CD4-positive, alpha-beta T cell (primary cell): ENCODE measurements at regions of chr6 and their contacts with region 1.

Region 1: DNA sequence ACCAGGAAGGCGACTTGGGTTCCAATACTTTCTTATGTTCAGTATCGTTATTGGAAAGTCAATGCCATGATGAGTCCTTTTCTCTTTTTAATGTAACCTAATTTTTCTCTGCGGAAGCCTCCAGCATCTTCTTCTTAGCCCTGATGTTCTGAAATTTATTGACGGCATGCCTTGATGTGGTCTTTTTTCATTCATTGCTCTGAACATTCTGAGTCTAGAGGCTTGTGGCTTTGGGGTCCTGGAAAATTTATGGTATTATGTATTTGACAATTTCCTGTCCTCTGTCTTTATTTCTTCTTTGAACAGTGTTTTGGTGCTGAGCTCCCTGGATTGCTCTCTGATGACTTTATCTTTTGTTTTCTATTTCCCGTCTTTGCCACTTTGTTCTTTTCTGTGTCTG is 28.7 kb upstream of the MAS1 start:
- DNase-seq: peak in 3 of 14 experiments; percentile 21 to 50 (median 39)
- ATAC-seq: peak; percentile 77
- H3K4me3 ChIP-seq: no peak overlapping the region
- H3K4me3 Mint-ChIP-seq: peak overlapping the region; percentile 42
- H3K27ac ChIP-seq: no peak overlapping the region
- H3K27ac Mint-ChIP-seq: peak overlapping the region; percentile 25
- H3K4me1 ChIP-seq: peaks cover 11% of the 10 kb centered on the region
- H3K4me1 Mint-ChIP-seq: peaks cover 21% of the 10 kb centered on the region
- H3K27me3 ChIP-seq: no peaks in the 10 kb centered on the region
- H3K27me3 Mint-ChIP-seq: no peaks in the 10 kb centered on the region
- CTCF ChIP-seq: no peak

Region 2: DNA sequence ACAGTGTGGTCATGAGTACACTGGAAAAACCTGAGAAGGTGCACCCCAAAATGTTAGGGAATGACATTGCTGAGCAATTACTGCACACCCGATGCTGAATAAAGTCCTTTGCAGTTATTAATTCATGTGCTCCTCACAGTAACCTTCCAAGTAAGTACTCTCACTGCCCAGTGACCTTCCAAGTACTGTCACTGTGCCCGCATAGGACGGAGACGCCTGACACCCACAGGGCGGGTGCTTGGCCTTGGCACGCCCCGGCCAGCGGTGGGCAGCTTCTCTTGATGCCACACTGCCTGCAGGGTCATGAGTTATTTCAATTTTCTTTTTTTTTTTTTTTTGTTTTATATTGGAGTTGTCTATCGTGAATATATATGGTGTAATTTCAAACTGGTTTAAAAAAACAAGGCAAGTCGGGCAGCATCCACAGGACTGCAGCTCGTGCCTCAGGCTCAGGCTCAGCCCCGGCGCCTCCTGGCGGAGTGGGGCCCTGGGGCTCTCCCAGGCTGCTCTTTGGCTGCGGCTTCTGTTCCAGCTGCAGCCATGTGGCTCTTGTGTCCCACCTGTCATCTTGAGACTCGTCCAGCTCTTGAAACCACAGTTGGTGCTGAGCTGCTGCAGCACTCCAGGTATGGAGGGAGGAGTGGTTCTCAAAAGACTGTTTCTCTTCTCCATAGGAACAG is 35.0 kb before region 1 on chr6:
- CTCF ChIA-PET with region 1: no interaction called
- POLR2A ChIA-PET with region 1: no interaction called
- intact Hi-C with region 1: no loop called
- DNase-seq: no peak
- ATAC-seq: no peak
- H3K4me3 ChIP-seq: no peak overlapping the region
- H3K4me3 Mint-ChIP-seq: no peak overlapping the region
- H3K27ac ChIP-seq: no peak overlapping the region
- H3K27ac Mint-ChIP-seq: no peak overlapping the region
- H3K4me1 ChIP-seq: peaks cover 5% of the 10 kb centered on the region
- H3K4me1 Mint-ChIP-seq: peaks cover 24% of the 10 kb centered on the region
- H3K27me3 ChIP-seq: no peaks in the 10 kb centered on the region
- H3K27me3 Mint-ChIP-seq: no peaks in the 10 kb centered on the region
- CTCF ChIP-seq: no peak

Region 3: DNA sequence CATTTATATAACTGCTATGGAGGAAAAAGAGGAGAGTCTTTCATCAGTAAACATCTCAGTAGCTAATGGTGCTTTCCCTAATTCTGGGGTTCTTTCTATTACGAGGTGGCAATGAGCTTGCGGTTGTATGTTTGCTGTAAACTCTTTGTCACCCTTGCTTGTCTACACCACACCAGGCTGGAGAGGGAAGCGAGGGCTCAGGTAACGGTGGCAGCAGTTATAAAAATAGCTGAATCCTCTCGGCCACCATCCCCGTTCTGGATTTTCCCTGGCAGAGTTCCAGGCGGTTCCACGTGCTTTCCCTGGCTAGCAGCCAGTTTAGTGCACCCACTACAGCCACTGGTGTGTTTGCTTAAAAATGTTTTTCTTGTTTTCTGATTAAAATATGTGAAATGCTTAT is 67.7 kb after region 1 on chr6:
- CTCF ChIA-PET with region 1: no interaction called
- POLR2A ChIA-PET with region 1: no interaction called
- intact Hi-C with region 1: no loop called
- DNase-seq: peak; percentile 11 to 88 (median 46)
- ATAC-seq: peak; percentile 90
- H3K4me3 ChIP-seq: no peak overlapping the region
- H3K4me3 Mint-ChIP-seq: no peak overlapping the region
- H3K27ac ChIP-seq: peak overlapping the region in 1 of 2 donors; percentile 59
- H3K27ac Mint-ChIP-seq: peak overlapping the region; percentile 41
- H3K4me1 ChIP-seq: peaks cover 17% of the 10 kb centered on the region
- H3K4me1 Mint-ChIP-seq: peaks cover 22% of the 10 kb centered on the region
- H3K27me3 ChIP-seq: no peaks in the 10 kb centered on the region
- H3K27me3 Mint-ChIP-seq: peaks cover 5% of the 10 kb centered on the region
- CTCF ChIP-seq: no peak

Region 4: DNA sequence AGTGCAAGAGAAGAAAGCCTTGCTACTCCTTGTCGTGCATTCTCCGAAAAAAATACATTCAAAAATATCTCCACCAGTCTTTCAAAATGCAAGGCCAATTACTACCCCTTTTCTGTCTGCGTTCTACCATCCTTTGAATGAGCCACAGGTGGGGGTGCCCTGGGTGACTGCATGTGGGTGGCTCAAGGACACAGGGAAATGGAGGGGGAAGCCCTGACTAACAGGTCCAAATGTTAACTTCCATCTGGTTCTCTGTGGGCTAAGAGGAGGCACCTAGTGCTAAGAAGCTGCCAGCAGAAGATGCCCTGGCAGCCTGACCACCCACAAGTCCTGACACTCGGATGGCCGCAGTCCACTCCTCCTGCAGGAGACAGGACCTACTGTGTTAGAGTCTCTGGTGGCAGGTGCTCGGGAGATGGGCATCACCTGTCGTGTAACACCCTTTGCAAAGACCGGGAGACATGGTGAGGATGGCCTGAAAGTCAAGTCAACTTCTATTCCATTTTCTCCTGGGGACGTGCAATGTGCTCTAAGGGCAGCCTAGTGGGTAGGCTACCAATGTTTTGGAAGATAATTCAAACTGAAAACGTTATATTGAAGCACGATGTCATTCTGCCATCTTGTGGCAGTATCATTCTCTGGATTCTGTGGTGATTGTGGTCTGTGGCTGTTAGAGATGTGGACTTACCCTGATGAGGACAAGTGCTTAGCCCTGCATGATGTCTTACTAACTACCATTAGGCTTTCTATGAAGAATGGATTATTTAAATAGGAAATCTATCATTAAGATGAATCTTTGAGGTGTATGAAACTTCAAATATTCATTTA is 79.4 kb after region 1 on chr6:
- CTCF ChIA-PET with region 1: no interaction called
- POLR2A ChIA-PET with region 1: no interaction called
- intact Hi-C with region 1: loop called (anchors 2 to 5 kb)
- DNase-seq: peak in 8 of 14 experiments; percentile 5 to 80 (median 22)
- ATAC-seq: peak; percentile 82
- H3K4me3 ChIP-seq: no peak overlapping the region
- H3K4me3 Mint-ChIP-seq: no peak overlapping the region
- H3K27ac ChIP-seq: no peak overlapping the region
- H3K27ac Mint-ChIP-seq: no peak overlapping the region
- H3K4me1 ChIP-seq: peaks cover 4% of the 10 kb centered on the region
- H3K4me1 Mint-ChIP-seq: peaks cover 8% of the 10 kb centered on the region
- H3K27me3 ChIP-seq: no peaks in the 10 kb centered on the region
- H3K27me3 Mint-ChIP-seq: peaks cover 5% of the 10 kb centered on the region
- CTCF ChIP-seq: peak; percentile 46

Region 5: DNA sequence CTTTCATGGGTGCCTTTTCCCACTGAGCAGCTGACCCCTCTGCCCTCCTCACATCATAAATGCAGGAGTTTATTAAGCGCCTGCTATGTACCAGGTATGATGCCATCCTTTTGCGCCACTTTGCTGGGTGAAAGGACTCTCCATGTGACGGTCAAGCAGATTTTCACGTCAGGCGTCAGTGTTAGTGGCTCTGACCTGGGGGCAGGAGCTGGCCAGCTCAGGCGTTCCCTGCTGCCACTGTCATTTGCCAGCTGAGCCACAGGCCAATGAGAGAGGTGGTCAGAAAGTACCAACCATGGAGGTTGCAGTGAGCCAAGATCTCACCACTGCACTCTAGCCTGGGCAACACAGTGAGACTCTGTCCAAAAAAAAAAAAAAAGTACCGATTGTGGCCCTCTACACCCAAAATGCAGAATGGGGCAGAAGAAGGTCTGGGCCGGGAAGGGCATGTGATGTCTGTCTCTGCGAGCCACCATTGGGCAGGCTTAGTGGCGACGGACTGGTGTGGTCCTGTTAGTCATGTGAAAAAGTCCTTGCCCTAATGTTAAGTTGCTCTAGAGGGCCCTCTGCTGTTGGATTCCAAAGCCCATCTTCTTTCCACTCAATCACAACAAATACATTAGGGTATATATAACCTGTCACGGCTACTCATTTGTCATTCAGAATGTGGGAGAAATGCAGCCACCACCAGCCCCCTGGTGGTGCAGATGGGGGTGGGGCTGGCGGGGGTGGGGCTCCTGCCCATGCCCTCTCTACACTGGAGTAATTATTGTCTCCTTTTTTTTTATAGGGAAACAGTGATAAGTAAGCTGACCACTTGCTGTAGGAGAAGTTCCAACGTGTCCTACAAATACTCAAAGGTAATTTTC is 241.1 kb after region 1 on chr6:
- CTCF ChIA-PET with region 1: no interaction called
- POLR2A ChIA-PET with region 1: no interaction called
- intact Hi-C with region 1: loop called (anchors 10 kb)
- DNase-seq: peak in 4 of 14 experiments; percentile 9 to 36 (median 25)
- ATAC-seq: no peak
- H3K4me3 ChIP-seq: no peak overlapping the region
- H3K4me3 Mint-ChIP-seq: no peak overlapping the region
- H3K27ac ChIP-seq: no peak overlapping the region
- H3K27ac Mint-ChIP-seq: no peak overlapping the region
- H3K4me1 ChIP-seq: no peaks in the 10 kb centered on the region
- H3K4me1 Mint-ChIP-seq: peaks cover 17% of the 10 kb centered on the region
- H3K27me3 ChIP-seq: no peaks in the 10 kb centered on the region
- H3K27me3 Mint-ChIP-seq: no peaks in the 10 kb centered on the region
- CTCF ChIP-seq: no peak

Region 6: GRCh38 chr6:160455541-160456213 is 593.6 kb after region 1 on chr6:
- CTCF ChIA-PET with region 1: no interaction called
- POLR2A ChIA-PET with region 1: no interaction called
- intact Hi-C with region 1: loop called in 1 of 2 experiments (anchors 5 kb)
- DNase-seq: peak; percentile 49 to 80 (median 62)
- ATAC-seq: peak; percentile 98
- H3K4me3 ChIP-seq: no peak overlapping the region
- H3K4me3 Mint-ChIP-seq: no peak overlapping the region
- H3K27ac ChIP-seq: no peak overlapping the region
- H3K27ac Mint-ChIP-seq: no peak overlapping the region
- H3K4me1 ChIP-seq: peaks cover 47% of the 10 kb centered on the region
- H3K4me1 Mint-ChIP-seq: peaks cover 35% of the 10 kb centered on the region
- H3K27me3 ChIP-seq: no peaks in the 10 kb centered on the region
- H3K27me3 Mint-ChIP-seq: peaks cover 29% of the 10 kb centered on the region
- CTCF ChIP-seq: peak; percentile 98

Region 7: DNA sequence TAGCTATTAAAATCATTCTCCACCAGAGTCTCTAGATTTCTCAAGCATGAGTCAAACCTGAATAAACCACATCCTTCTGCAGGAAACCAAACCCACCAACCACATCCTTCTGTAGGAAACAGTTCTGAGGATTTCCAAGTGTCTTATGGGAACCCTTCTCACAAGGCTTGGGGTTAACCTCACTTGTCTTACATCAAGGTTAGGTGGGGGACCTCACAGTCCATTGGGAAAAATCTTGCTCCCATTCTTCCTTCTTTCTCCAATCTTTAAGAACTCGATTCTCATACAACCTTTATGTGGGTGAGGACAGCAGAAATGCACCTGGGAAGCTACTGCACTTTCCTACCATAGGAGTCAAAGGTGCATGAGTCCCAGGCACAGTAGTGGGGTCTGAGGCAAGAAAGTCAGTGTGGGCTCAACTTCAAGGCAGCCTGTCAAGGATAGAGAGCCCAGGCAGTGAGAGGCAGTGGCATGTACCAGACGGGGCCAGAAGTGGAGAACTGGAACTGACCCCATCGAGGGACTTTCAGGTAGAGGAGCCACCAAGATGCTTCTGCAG is 600.5 kb after region 1 on chr6:
- CTCF ChIA-PET with region 1: no interaction called
- POLR2A ChIA-PET with region 1: interaction called, 3 read pairs
- intact Hi-C with region 1: loop called (anchors 2 to 5 kb)
- DNase-seq: peak in 10 of 14 experiments; percentile 18 to 95 (median 54)
- ATAC-seq: peak; percentile 89
- H3K4me3 ChIP-seq: peak overlapping the region; percentile 19
- H3K4me3 Mint-ChIP-seq: peak overlapping the region; percentile 68
- H3K27ac ChIP-seq: no peak overlapping the region
- H3K27ac Mint-ChIP-seq: peak overlapping the region; percentile 66
- H3K4me1 ChIP-seq: peaks cover 66% of the 10 kb centered on the region
- H3K4me1 Mint-ChIP-seq: peaks cover 82% of the 10 kb centered on the region
- H3K27me3 ChIP-seq: no peaks in the 10 kb centered on the region
- H3K27me3 Mint-ChIP-seq: peaks cover 17% of the 10 kb centered on the region
- CTCF ChIP-seq: no peak

Region 8: GRCh38 chr6:160534050-160534696 is 672.1 kb after region 1 on chr6:
- CTCF ChIA-PET with region 1: no interaction called
- POLR2A ChIA-PET with region 1: no interaction called
- intact Hi-C with region 1: loop called in 1 of 2 experiments (anchors 1 kb)
- DNase-seq: peak; percentile 32 to 75 (median 51)
- ATAC-seq: peak; percentile 64
- H3K4me3 ChIP-seq: peak overlapping the region; percentile 6
- H3K4me3 Mint-ChIP-seq: no peak overlapping the region
- H3K27ac ChIP-seq: no peak overlapping the region
- H3K27ac Mint-ChIP-seq: no peak overlapping the region
- H3K4me1 ChIP-seq: peaks cover 9% of the 10 kb centered on the region
- H3K4me1 Mint-ChIP-seq: no peaks in the 10 kb centered on the region
- H3K27me3 ChIP-seq: no peaks in the 10 kb centered on the region
- H3K27me3 Mint-ChIP-seq: peaks cover 7% of the 10 kb centered on the region
- CTCF ChIP-seq: peak; percentile 96